Ascending aorta (tissue), 2 donors: ENCODE measurements at regions of chrX and their contacts with region 1.

Region 1: DNA sequence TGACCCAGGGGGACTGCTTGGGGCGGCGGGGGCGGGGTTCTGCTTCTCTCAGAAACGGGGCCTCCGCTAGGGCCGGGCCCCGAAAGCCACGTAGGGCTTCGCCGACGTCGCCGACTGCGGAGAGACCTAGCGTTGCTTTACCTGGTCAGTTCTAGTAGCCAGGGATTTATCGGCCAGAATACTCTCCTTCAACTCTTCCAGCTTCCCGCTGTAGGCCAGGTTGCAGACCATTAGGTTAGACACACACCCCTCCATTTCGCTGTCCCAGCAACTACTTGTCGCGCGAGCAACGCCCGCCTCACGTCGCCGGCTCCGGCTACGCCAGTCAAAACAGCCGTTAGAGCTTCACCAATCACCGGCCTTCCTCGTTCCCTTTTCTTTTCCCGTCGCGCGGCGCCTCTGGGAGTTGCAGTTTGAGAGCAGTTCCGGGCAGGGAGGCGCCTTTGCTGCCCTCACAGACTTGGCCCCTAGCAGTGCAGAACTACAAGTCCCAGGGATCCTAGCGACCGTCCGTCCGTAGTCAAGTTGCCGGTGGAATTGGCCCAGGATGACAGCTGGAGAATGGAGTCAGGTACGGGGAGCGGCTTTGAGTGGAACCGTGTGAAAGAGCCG is at the starts of genes ATG4A and PSMD10:
- DNase-seq: peak; percentile 87 to 96
- H3K4me3 ChIP-seq: peak within 1 kb of the TSS; percentile 51 to 77
- H3K27ac ChIP-seq: peak within 1 kb of the TSS; percentile 62 to 80
- H3K4me1 ChIP-seq: no peaks in the 10 kb centered on the region
- H3K27me3 ChIP-seq: no peaks in the 10 kb centered on the region
- CTCF ChIP-seq: no peak
- total RNA-seq, gene ATG4A: 15.0 TPM
- total RNA-seq, gene PSMD10: 11.5 TPM

Region 2: DNA sequence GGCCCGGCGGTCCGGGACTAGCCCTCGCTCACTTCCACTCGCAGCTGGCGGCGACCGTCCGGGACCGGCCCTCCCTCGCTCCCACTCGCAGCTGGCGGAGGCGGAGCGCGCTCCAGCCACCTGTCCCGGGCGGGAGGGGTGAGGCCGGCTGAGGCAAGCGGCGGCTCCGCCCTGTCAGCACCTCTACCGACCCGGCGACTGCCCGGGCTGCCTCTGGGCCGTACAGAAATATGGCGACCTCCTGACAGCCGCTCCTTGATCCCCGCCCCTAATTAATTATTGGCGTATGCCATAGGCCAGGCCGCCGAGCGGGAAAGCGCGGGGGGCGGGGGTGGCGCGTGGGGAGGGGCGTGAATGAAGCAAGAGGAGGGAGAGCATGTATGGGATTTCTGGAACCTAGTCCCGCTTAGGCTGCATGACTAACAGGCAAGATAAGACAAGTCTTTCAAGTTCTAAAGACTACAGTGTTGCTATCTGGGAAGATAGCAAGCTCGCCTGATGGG is 1091.3 kb before region 1 on chrX and contains the start of gene MORC4:
- intact Hi-C with region 1: loop called (anchors 5 kb)
- DNase-seq: peak; percentile 43 to 88
- H3K4me3 ChIP-seq: peak within 1 kb of the TSS; percentile 50 to 71
- H3K27ac ChIP-seq: peak within 1 kb of the TSS; percentile 73 to 75
- H3K4me1 ChIP-seq: no peaks in the 10 kb centered on the region
- H3K27me3 ChIP-seq: no peaks in the 10 kb centered on the region
- CTCF ChIP-seq: no peak
- total RNA-seq, gene MORC4: 7.1 TPM

Region 3: DNA sequence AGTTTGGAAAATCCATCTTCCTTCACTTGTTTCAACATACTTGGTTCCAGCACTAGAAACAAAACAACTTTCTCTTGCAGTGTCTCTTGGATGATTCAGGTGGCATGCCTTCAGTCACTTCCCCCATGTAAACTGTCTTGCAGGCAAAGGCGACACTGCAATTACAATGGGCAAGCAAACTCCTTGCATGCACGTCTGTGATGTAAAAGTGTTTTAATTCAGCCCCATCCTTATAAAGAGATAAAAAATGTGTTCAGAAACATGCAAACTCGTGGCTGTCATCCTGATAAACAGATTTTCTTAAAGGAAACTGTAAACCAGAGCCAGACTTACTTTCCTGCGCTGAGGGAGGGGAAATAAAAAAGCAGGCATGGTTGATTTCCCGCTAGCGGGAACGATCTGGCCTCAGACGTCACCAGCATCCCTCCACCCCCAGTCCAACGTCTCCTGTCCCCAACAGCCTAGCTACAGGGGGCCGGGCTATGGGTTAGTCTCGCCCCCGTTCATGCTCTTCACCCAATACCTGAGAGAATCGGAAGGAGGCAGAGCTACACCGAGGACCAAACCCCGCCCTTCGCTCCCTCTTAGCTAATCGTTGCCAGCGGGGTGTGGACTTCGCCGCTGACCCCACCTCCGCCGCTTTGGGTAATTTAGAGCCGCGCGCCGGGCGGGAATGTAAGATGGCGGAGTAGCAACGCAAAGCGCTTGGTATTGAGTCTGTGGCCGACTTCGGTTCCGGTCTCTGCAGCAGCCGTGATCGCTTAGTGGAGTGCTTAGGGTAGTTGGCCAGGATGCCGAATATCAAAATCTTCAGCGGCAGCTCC is 463.3 kb before region 1 on chrX and contains the start of gene PRPS1:
- intact Hi-C with region 1: loop called (anchors 5 kb)
- DNase-seq: peak; percentile 77 to 96
- H3K4me3 ChIP-seq: peak within 1 kb of the TSS; percentile 47 to 74
- H3K27ac ChIP-seq: peak within 1 kb of the TSS; percentile 77 to 86
- H3K4me1 ChIP-seq: no peaks in the 10 kb centered on the region
- H3K27me3 ChIP-seq: no peaks in the 10 kb centered on the region
- CTCF ChIP-seq: no peak
- total RNA-seq, gene PRPS1: 14.0 TPM

Region 4: GRCh38 chrX:108439434-108439883 is 348.1 kb after region 1 on chrX and contains the start of gene COL4A5:
- intact Hi-C with region 1: loop called (anchors 5 kb)
- DNase-seq: peak in 1 of 2 donors; percentile 63
- H3K4me3 ChIP-seq: peak within 1 kb of the TSS; percentile 32 to 67
- H3K27ac ChIP-seq: peak within 1 kb of the TSS; percentile 17 to 48
- H3K4me1 ChIP-seq: no peaks in the 10 kb centered on the region
- H3K27me3 ChIP-seq: no peaks in the 10 kb centered on the region
- CTCF ChIP-seq: no peak
- total RNA-seq, gene COL4A5: 12.0 TPM